ENCODE measurements at regions of chr20 and their contacts with region 1.

Region 1: GRCh38 chr20:40689943-40690835 is 1.2 kb upstream of the MAFB start:
- DNase-seq: peak; percentile 92
- H3K4me3 Mint-ChIP-seq: peak overlapping the region; percentile 81
- H3K27ac Mint-ChIP-seq: no peak overlapping the region
- H3K4me1 Mint-ChIP-seq: no peaks in the 10 kb centered on the region
- H3K27me3 Mint-ChIP-seq: no peaks in the 10 kb centered on the region
- CTCF ChIP-seq: peak; percentile 95

Region 2: GRCh38 chr20:39264506-39265172 is 1425.5 kb before region 1 on chr20:
- CTCF ChIA-PET with region 1: interaction called, 14 read pairs
- POLR2A ChIA-PET with region 1: no interaction called
- intact Hi-C with region 1: loop called (anchors 5 kb)
- DNase-seq: peak; percentile 86
- H3K4me3 Mint-ChIP-seq: no peak overlapping the region
- H3K27ac Mint-ChIP-seq: no peak overlapping the region
- H3K4me1 Mint-ChIP-seq: peaks cover 19% of the 10 kb centered on the region
- H3K27me3 Mint-ChIP-seq: no peaks in the 10 kb centered on the region
- CTCF ChIP-seq: peak; percentile 87

Region 3: DNA sequence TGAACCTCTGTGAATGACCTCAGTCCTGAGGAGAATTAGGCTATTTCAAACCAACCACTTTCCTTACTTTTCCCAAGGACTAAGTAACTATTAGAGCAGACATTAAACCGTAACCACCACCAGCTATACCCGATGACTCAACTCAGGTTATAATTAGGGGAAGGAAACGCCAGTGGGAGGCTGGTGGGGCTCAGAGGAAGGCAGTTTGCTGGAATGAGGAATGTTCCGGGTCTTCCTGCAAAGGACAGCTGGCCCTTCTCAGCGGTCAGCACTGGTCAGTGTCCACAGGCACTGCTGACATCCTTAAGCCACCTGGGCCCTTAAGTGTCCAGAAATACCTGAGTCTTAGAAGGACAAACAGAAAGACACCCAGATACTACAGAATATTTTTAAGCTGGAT is 516.3 kb before region 1 on chr20:
- CTCF ChIA-PET with region 1: interaction called, 4 read pairs
- POLR2A ChIA-PET with region 1: interaction called, 17 read pairs
- intact Hi-C with region 1: no loop called
- DNase-seq: no peak
- H3K4me3 Mint-ChIP-seq: no peak overlapping the region
- H3K27ac Mint-ChIP-seq: no peak overlapping the region
- H3K4me1 Mint-ChIP-seq: no peaks in the 10 kb centered on the region
- H3K27me3 Mint-ChIP-seq: no peaks in the 10 kb centered on the region
- CTCF ChIP-seq: no peak

Region 4: GRCh38 chr20:40492716-40493470 is 197.3 kb before region 1 on chr20:
- CTCF ChIA-PET with region 1: interaction called, 3 read pairs
- POLR2A ChIA-PET with region 1: interaction called, 3 read pairs
- intact Hi-C with region 1: loop called (anchors 5 kb)
- DNase-seq: peak; percentile 93
- H3K4me3 Mint-ChIP-seq: peak overlapping the region; percentile 47
- H3K27ac Mint-ChIP-seq: peak overlapping the region; percentile 72
- H3K4me1 Mint-ChIP-seq: peaks cover 59% of the 10 kb centered on the region
- H3K27me3 Mint-ChIP-seq: no peaks in the 10 kb centered on the region
- CTCF ChIP-seq: no peak

Region 5: DNA sequence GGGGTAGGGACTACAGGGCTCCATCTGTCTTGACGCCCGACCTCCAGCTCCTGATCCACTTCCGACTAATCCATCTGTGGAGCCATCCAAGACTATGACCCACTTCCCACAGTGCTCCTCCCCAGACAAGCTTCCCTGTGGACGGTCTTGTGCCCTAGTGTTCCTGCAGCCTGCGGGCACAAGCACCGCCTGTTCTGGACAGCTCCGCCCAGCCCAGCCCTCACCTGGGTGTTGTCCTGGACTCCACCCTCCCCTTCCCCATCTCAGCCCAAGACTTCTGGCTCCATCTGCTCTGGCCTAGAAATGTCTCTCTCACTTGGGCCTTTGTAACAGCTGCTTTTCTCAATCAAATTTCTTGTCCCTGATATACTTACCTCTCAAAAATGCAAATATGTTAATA is 103.1 kb before region 1 on chr20:
- CTCF ChIA-PET with region 1: interaction called, 5 read pairs
- POLR2A ChIA-PET with region 1: interaction called, 25 read pairs
- intact Hi-C with region 1: no loop called
- DNase-seq: peak; percentile 16
- H3K4me3 Mint-ChIP-seq: no peak overlapping the region
- H3K27ac Mint-ChIP-seq: peak overlapping the region; percentile 10
- H3K4me1 Mint-ChIP-seq: peaks cover 30% of the 10 kb centered on the region
- H3K27me3 Mint-ChIP-seq: no peaks in the 10 kb centered on the region
- CTCF ChIP-seq: no peak

Region 6: GRCh38 chr20:40668449-40669228 is 21.6 kb before region 1 on chr20:
- CTCF ChIA-PET with region 1: interaction called, 4 read pairs
- POLR2A ChIA-PET with region 1: interaction called, 13 read pairs
- intact Hi-C with region 1: no loop called
- DNase-seq: peak; percentile 64
- H3K4me3 Mint-ChIP-seq: no peak overlapping the region
- H3K27ac Mint-ChIP-seq: no peak overlapping the region
- H3K4me1 Mint-ChIP-seq: peaks cover 5% of the 10 kb centered on the region
- H3K27me3 Mint-ChIP-seq: no peaks in the 10 kb centered on the region
- CTCF ChIP-seq: no peak

Region 7: DNA sequence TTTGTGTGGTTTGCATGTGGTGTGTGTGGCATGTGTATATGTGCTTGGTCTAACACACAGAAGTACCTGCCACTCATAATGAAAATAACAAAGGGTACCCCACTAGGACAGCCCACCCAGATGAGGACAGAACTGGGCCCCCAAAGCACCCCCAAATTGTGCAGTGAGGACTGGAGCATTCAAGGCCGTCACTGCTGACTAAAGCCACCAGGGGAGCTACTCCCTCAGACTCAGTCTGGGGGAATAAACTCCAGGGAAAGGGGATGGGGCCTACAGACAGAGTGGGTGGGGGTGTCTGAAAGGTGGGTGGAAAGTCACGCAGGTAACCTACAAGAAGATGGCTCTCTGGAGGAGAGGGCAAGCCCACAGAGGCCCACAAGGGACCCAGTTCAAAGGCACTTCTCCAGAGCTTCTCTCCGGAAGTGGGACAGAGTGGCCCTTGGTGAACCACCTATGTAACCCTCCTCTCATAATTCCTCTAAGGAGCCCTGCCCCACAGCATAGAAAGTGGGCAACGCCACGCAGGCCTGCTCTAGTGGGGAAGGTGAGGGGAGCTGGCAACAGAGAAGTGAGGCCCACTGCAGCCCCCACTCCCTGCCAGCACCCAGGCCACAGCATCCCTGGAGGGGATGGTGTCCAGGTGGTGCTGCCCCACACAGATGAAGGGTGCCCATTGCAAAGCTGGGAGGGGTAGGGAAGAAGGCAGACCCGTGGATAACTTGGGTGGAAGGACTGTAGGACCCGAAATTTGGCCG is 121.6 kb after region 1 on chr20:
- CTCF ChIA-PET with region 1: no interaction called
- POLR2A ChIA-PET with region 1: no interaction called
- intact Hi-C with region 1: no loop called
- DNase-seq: no peak
- H3K4me3 Mint-ChIP-seq: no peak overlapping the region
- H3K27ac Mint-ChIP-seq: no peak overlapping the region
- H3K4me1 Mint-ChIP-seq: peaks cover 13% of the 10 kb centered on the region
- H3K27me3 Mint-ChIP-seq: no peaks in the 10 kb centered on the region
- CTCF ChIP-seq: no peak

Region 8: GRCh38 chr20:41154436-41155176 is 464.4 kb after region 1 on chr20:
- CTCF ChIA-PET with region 1: no interaction called
- POLR2A ChIA-PET with region 1: no interaction called
- intact Hi-C with region 1: no loop called
- DNase-seq: no peak
- H3K4me3 Mint-ChIP-seq: no peak overlapping the region
- H3K27ac Mint-ChIP-seq: no peak overlapping the region
- H3K4me1 Mint-ChIP-seq: peaks cover 30% of the 10 kb centered on the region
- H3K27me3 Mint-ChIP-seq: no peaks in the 10 kb centered on the region
- CTCF ChIP-seq: no peak

Measured in MCF 10A (cell line).